ENCODE measurements at regions of chr5 and their contacts with region 1.

Region 1: DNA sequence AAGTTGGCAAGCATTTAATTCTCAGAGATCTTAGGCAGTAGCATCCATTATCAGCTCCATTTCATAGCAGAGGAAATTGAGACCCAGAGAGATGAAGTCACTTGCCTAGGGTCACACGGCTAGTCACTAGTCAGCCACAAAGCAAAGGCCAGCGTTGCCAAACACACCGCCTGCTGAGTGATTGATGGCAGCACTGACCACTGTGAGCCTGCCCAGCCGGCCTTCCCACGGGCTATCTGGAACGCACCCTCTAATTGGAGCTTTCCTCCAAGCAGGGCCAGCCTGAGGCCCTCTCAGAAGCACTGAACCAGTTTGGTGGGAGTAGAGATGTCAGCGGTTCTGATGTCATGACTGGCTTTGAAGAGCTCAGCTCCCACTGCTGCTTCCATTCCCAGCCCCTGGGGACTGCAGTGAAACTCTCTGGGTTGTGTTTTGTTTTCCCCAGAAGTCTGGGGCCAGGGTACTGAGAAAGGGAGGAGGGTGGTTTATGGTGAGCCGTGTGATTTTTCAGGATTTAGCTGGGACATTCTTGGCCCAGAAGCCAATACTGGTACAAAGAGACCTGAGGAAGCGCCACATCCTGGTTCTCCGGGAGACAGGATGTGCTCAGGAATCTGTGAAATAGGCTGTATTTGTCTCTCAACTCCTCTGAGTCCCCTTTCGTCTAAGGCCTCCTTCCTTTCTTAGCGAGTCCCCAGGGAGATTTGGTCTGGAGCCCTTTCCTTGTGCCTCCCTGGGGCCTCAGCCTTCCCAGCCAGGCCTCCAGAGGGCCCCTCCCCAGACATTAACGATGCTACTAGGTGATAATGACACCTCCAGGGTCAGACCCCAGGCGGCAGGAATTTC is 44.5 kb downstream of the SPRY4 start:
- DNase-seq: peak; percentile 48 to 78 (median 64)
- ATAC-seq: peak; percentile 96
- H3K4me3 ChIP-seq: no peak overlapping the region
- H3K27ac ChIP-seq: no peak overlapping the region
- H3K4me1 ChIP-seq: peaks cover 6% of the 10 kb centered on the region in 2 experiments
- H3K27me3 ChIP-seq: no peaks in the 10 kb centered on the region; a peak in 2 of 5 replicates
- CTCF ChIP-seq: no peak
- EP300 ChIP-seq: no peak
- POLR2A ChIP-seq: no peak
- RAD21 ChIP-seq: 0 out of 4 replicates have a peak, but pooled peaks of 1 of the 2 experiments have one; percentile 16

Region 2: GRCh38 chr5:141543053-141543452 is 737.2 kb before region 1 on chr5:
- CTCF ChIA-PET with region 1: no interaction called
- POLR2A ChIA-PET with region 1: no interaction called
- in situ Hi-C with region 1: no loop called
- intact Hi-C with region 1: no loop called
- DNase-seq: no peak
- ATAC-seq: no peak
- H3K4me3 ChIP-seq: no peak overlapping the region
- H3K27ac ChIP-seq: no peak overlapping the region
- H3K4me1 ChIP-seq: no peaks in the 10 kb centered on the region; a peak in 2 of 5 replicates
- H3K27me3 ChIP-seq: no peaks in the 10 kb centered on the region
- CTCF ChIP-seq: no peak
- EP300 ChIP-seq: no peak
- POLR2A ChIP-seq: no peak
- RAD21 ChIP-seq: no peak

Region 3: DNA sequence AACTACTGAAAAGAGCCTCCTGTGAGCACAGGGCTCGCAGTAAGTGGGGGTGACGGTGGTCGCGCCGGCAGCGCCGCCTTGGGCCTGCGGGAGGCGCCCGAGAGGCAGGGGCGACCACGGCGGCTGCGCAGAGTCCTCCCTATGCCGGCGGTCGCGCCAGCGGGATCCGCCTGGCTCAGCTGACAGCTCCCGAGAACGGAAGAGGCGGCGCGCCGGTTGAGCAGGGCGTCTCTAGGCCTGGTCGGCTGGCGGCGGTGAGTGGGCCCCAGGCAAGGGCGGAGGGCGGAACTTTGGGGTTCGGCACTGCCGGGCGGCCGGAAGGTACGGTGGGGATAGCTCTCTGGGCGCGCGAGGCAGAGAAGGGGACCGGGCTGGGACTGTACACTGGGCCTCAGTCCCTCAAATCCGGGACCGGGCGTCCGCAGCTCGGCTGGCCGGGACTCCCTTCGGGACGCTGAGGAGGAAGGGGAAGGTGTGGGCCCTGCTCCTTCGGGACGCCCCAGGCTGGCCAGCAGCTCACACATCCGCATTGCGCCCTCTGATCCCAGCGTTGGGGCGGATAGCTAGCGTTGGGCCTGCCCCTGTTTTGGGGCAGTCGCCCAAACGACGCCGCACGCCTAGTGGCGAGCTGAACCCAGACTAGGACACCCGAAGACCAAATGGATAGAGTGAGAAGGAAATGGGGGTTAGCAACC is 311.2 kb before region 1 on chr5 and contains the start of gene RNF14:
- CTCF ChIA-PET with region 1: no interaction called
- POLR2A ChIA-PET with region 1: no interaction called
- in situ Hi-C with region 1: no loop called
- intact Hi-C with region 1: no loop called
- DNase-seq: peak; percentile 93 to 97 (median 94)
- ATAC-seq: peak; percentile 97
- H3K4me3 ChIP-seq: peak within 1 kb of the TSS; percentile 72
- H3K27ac ChIP-seq: peak within 1 kb of the TSS; percentile 94
- H3K4me1 ChIP-seq: peaks cover 9 to 14% of the 10 kb centered on the region in 2 experiments; a peak in 3 of 5 replicates
- H3K27me3 ChIP-seq: no peaks in the 10 kb centered on the region
- CTCF ChIP-seq: peak; percentile 85 to 97 (median 86)
- EP300 ChIP-seq: no peak
- POLR2A ChIP-seq: peak; percentile 98
- RAD21 ChIP-seq: peak in 1 of 2 experiments; percentile 25; a peak in 1 of 4 replicates
- polyA plus RNA-seq, gene RNF14: 100 to 140 TPM

Region 4: DNA sequence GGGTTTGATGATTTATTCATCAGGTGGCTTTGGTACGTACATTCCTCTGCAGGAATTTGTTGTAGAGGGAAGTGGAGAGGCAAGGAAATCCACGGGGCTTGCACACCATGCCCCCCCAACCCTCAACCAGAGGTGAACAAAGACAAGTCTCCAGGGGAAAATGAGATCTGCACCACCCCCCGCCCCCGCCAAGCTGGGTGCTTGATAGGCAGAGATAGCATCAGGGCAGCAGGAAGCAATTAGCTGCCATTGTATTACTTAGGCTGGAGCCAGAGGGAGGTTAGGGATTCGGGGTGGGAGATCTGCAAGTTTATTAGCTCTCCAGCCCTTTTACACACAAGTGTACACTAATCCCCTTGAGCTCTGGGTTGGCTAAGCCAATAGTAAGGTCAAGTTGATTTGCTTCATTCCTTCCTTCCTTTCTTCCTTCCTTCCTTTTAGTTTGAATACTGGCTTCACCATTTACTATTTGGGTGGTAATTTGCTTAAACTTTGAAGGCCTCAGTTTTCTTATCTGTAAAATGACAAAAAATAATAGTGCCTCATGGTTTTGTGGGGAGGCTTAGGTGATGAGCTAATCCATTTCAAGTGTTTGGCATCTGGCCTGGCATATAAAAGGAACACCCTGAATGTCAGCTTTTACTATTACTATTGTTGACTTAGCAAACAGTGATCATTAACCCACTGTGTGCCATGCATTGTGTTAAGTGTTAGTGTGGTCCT is 10.4 kb after region 1 on chr5:
- CTCF ChIA-PET with region 1: no interaction called
- POLR2A ChIA-PET with region 1: interaction called, 13 read pairs
- in situ Hi-C with region 1: no loop called
- intact Hi-C with region 1: no loop called
- DNase-seq: peak in 1 of 4 experiments; percentile 34
- ATAC-seq: peak; percentile 14; the same call in 1 of the 3 replicates
- H3K4me3 ChIP-seq: no peak overlapping the region
- H3K27ac ChIP-seq: no peak overlapping the region
- H3K4me1 ChIP-seq: peaks cover 14 to 20% of the 10 kb centered on the region in 2 experiments; a peak in 3 of 5 replicates
- H3K27me3 ChIP-seq: no peaks in the 10 kb centered on the region
- CTCF ChIP-seq: no peak
- EP300 ChIP-seq: no peak
- POLR2A ChIP-seq: no peak
- RAD21 ChIP-seq: no peak

Measured in K562 (cell line).